ENCODE measurements at regions of chr19 and their contacts with region 1.

Region 1: DNA sequence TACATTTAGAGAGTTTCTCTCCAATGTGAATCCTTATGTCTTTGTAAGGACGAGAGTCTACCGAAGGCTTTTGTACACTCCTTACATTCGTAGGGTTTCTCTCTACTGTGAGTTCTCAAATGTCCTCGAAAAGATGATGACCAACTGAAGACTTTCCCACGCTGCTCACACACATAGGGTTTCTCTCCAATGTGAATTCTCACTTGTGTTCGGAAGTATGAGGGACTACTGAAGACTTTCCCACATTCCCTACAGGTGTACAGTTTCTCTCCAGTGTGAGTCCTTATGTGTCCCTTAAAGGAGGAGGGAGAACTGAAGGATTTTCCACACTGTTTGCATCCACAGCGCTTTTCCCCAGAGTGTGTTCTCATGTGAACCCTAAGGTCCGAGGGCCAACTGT is 4.0 kb upstream of the ZNF57 start:
- DNase-seq: no peak
- ATAC-seq: no peak
- H3K4me3 ChIP-seq: no peak overlapping the region
- H3K27ac ChIP-seq: no peak overlapping the region
- H3K4me1 ChIP-seq: peaks cover 14% of the 10 kb centered on the region
- H3K27me3 ChIP-seq: no peaks in the 10 kb centered on the region
- CTCF ChIP-seq: no peak
- POLR2A ChIP-seq: no peak

Region 2: DNA sequence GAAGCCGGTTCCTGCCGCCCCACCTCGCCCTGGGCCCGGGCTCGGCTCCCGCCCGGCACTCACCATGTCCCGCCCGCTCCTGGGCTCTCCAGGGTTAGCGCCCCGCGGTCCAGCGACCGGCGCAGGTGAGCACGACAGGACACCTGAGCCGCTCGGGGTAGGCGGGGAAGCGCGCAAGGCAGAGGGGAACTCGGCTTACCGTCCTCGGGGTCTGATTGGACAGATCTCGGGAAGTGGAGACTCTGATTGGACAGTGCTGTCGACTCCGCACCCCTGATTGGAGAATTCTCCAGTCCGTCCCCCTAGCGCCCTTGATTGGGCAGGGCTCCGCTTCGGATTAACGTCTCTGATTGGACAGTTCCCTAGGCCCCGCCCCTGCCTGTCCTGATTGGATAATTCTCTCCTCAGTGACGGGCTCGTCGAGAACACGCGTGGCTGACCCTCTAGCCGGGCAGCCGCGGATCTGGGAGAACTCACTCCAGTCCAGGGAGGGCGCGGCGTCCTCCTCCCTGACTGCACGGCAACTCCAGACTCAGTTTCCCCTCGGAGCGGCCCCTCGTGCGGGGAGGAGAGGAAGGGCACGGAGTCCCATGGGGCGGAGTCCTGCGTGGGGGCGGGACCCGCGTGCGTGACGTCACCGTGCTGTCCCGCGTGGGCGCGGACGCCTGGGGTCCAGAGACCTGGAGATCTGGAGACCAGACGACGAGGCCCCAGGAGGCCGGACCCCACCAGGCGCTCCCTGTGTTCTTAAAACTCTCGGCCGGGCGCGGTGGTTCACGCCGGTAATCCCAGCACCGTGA is 48.3 kb after region 1 on chr19 and contains the start of gene ZNF77:
- intact Hi-C with region 1: loop called (anchors 5 kb)
- DNase-seq: peak; percentile 99 to 100 (median 99)
- ATAC-seq: peak; percentile 99
- H3K4me3 ChIP-seq: peak within 1 kb of the TSS; percentile 57 to 76
- H3K27ac ChIP-seq: peak within 1 kb of the TSS; percentile 58 to 97 (median 86)
- H3K4me1 ChIP-seq: peaks cover 26% of the 10 kb centered on the region
- H3K27me3 ChIP-seq: no peaks in the 10 kb centered on the region
- CTCF ChIP-seq: peak in 4 of 7 experiments; percentile 27 to 36 (median 28)
- POLR2A ChIP-seq: peak; percentile 63 to 80 (median 79)
- total RNA-seq, gene ZNF77: 3.3 to 6.2 TPM

Region 3: GRCh38 chr19:2983351-2984195 is 86.9 kb after region 1 on chr19:
- intact Hi-C with region 1: no loop called
- DNase-seq: peak; percentile 58 to 71 (median 66)
- ATAC-seq: peak; percentile 51
- H3K4me3 ChIP-seq: no peak overlapping the region
- H3K27ac ChIP-seq: peak overlapping the region; percentile 59 to 88 (median 81)
- H3K4me1 ChIP-seq: peaks cover 29% of the 10 kb centered on the region
- H3K27me3 ChIP-seq: no peaks in the 10 kb centered on the region
- CTCF ChIP-seq: no peak
- POLR2A ChIP-seq: peak in 1 of 3 donors; percentile 1

Measured in body of pancreas (tissue), 4 donors.